Right ventricle myocardium inferior (tissue), 1 donor: ENCODE measurements at regions of chr2 and their contacts with region 1.

Region 1: GRCh38 chr2:157492189-157492773 is 48.4 kb upstream of the CYTIP start:
- DNase-seq: no peak
- ATAC-seq: peak; percentile 81

Region 2: GRCh38 chr2:157302492-157303099 is 189.7 kb before region 1 on chr2:
- intact Hi-C with region 1: loop called (anchors 5 kb)
- DNase-seq: no peak
- ATAC-seq: peak; percentile 54

Region 3: GRCh38 chr2:157327621-157328500 is 164.4 kb before region 1 on chr2:
- intact Hi-C with region 1: loop called (anchors 5 kb)
- DNase-seq: peak; percentile 87
- ATAC-seq: peak; percentile 94

Region 4: GRCh38 chr2:157596992-157597681 is 104.9 kb after region 1 on chr2:
- intact Hi-C with region 1: loop called (anchors 10 kb)
- DNase-seq: peak; percentile 68
- ATAC-seq: no peak

Region 5: DNA sequence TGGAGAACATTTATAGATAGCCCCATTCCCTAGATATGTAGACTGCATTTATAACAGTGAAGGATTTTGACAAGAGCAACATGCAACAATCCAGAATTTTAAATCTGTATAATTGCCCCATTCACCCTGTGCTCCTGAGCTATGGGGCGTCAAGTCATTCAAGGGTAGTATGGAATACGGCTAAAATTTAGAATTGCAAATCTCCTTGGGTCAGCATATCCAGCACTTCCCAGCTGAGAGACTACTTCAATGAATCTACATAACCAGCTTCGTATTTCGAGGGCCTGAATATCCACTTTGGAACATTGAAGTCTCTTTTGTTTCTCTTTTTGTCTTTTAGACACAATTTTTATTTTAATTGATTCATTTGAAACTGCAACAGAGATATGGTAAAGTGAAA is 164.8 kb after region 1 on chr2:
- intact Hi-C with region 1: no loop called
- DNase-seq: no peak
- ATAC-seq: no peak

Region 6: GRCh38 chr2:158011055-158011771 is 518.9 kb after region 1 on chr2:
- intact Hi-C with region 1: loop called (anchors 5 kb)
- DNase-seq: no peak
- ATAC-seq: no peak